Caco-2 (cell line): ENCODE measurements at regions of chr9 and their contacts with region 1.

Region 1: GRCh38 chr9:120528327-120528726 is 51.6 kb downstream of the CDK5RAP2 start:
- DNase-seq: no peak
- H3K4me3 ChIP-seq: no peak overlapping the region
- H3K4me3 Mint-ChIP-seq: no peak overlapping the region
- H3K27ac Mint-ChIP-seq: no peak overlapping the region
- H3K4me1 ChIP-seq: peaks cover 16% of the 10 kb centered on the region; the same call in 1 of the 2 replicates
- H3K4me1 Mint-ChIP-seq: peaks cover 34% of the 10 kb centered on the region
- H3K27me3 ChIP-seq: no peaks in the 10 kb centered on the region
- H3K27me3 Mint-ChIP-seq: no peaks in the 10 kb centered on the region
- CTCF ChIP-seq: no peak

Region 2: DNA sequence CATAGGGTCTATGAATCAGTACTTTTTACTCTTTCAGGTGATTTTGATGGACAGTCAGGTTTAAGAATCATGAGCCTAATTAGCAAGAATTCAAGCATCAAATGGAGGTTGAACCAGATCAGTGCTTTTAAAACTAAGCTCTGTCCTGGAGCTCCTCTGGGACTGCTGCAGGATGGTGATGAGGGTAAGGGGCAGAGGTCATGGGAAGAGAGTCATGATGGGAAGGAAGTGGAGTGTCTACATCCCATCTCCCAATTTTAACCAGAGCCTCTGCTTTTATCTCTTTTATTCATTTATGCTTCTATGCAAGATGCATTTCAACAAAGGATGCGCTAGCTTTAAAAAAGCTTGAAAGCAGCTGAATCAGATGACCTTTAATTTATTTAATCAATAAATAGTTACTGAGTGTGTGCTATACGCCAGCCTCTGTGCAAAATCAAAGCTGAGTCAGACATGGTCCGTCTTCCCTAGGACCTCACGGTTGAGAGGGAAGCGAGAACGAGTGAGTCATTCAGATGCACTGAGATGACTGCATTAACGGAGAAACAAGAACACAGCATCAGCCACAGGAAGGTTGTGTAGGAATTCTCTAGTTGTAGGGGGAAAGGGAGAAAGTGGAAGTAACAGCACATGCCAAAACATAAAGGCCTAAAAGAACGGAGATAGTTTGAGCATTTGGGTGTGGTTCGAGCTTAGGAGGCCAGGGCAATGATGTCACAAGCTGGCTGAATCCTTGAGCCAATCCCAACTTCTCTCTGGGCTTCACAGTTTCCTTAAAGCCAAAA is 717.5 kb before region 1 on chr9:
- CTCF ChIA-PET with region 1: no interaction called
- POLR2A ChIA-PET with region 1: no interaction called
- intact Hi-C with region 1: no loop called
- DNase-seq: no peak
- H3K4me3 ChIP-seq: no peak overlapping the region
- H3K4me3 Mint-ChIP-seq: no peak overlapping the region
- H3K27ac Mint-ChIP-seq: no peak overlapping the region
- H3K4me1 ChIP-seq: no peaks in the 10 kb centered on the region
- H3K4me1 Mint-ChIP-seq: no peaks in the 10 kb centered on the region
- H3K27me3 ChIP-seq: no peaks in the 10 kb centered on the region
- H3K27me3 Mint-ChIP-seq: peaks cover 15% of the 10 kb centered on the region
- CTCF ChIP-seq: no peak

Region 3: DNA sequence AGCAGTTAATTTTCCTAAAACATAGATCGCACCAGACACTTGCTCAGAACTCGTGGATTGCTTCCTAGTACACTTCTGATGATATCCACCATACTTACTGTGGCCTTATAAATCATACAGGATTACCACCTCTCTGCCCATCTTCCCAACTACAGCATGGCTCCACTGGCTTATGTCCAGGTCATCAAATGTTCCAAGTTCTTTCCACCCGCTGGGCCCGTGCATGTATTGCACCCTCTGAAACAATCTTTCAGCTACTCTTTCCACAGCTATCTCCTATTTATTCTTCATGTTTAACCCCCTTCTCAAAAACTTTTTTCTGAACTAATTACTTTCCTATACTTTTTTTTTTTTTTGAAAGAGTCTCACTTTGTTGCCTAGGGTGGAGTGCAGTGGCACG is 246.4 kb after region 1 on chr9:
- CTCF ChIA-PET with region 1: no interaction called
- POLR2A ChIA-PET with region 1: interaction called, 11 read pairs
- intact Hi-C with region 1: no loop called
- DNase-seq: no peak
- H3K4me3 ChIP-seq: no peak overlapping the region
- H3K4me3 Mint-ChIP-seq: no peak overlapping the region
- H3K27ac Mint-ChIP-seq: no peak overlapping the region
- H3K4me1 ChIP-seq: peaks cover 7% of the 10 kb centered on the region
- H3K4me1 Mint-ChIP-seq: peaks cover 16% of the 10 kb centered on the region
- H3K27me3 ChIP-seq: no peaks in the 10 kb centered on the region
- H3K27me3 Mint-ChIP-seq: no peaks in the 10 kb centered on the region
- CTCF ChIP-seq: no peak